ENCODE measurements at regions of chr4 and their contacts with region 1.

Region 1: DNA sequence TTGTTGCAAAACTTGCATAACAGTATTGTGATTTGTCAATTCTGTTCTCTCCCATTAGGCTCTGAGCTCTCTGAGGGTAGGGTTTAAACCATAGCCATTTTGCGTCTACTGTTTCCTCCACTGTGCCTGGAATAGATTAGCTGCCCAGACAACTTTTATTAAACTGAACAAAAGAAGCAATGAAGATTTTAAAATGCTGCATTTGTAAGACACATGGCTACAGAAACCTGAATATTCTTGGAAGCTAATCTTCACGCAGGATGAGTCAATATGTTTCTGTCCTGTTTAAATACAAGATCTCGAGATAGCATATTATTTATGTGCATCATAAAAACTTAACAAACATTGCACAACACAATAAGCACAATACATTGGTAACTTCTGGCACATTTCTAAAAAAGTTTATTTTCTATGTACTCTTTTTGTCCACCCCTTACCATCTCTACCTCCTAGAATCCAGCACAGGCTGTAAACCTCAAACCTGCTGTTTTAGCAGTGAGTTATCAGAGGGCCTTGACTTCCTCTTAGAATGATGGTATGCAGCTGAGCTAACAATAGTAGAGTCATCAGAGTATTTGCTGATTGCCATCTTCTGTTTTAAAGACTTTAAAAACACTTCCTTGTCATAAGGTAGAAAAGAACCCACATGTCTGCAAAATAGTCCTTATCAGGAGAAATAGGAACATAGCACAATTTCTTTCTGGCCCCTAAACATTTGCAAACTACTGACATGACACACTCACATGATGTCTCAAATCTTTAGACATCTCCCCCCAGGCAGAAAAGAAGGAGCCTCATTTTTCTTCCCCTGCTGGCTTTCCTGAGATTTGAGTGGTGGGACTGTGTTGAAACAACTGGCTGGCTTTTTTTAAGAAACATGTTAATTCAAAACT is 10.6 kb upstream of the CCNG2 start:
- DNase-seq: no peak
- ATAC-seq: peak; percentile 73

Region 2: GRCh38 chr4:77095101-77095821 is 51.2 kb before region 1 on chr4:
- intact Hi-C with region 1: loop called in 1 of 2 experiments (anchors 10 kb)
- DNase-seq: peak; percentile 77 to 86
- ATAC-seq: peak; percentile 99

Measured in left colon (tissue), 2 donors.